ENCODE measurements at regions of chr4 and their contacts with region 1.

Region 1: DNA sequence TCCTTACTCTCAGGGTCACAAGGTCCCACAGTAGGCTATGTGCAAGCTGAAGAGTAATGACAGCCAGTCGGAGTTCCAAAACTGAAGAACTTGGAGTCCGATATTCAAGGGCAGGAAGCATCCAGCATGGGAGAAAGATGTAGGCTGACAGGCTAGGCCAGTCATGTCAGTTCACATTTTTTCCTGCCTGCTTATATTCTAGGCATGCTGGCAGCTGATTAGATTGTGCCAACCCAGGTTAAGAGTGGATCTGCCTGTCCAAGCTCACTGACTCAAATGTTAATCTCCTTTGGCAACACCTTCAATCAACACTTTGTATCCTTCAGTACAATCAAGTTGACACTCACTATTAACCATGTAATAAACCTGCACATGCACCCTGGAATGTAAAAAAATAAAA is 960.9 kb upstream of the HS3ST1 start:
- DNase-seq: no peak
- ATAC-seq: no peak
- H3K4me3 ChIP-seq: no peak overlapping the region
- H3K4me3 Mint-ChIP-seq: no peak overlapping the region
- H3K27ac ChIP-seq: no peak overlapping the region
- H3K27ac Mint-ChIP-seq: no peak overlapping the region
- H3K4me1 ChIP-seq: no peaks in the 10 kb centered on the region
- H3K4me1 Mint-ChIP-seq: no peaks in the 10 kb centered on the region
- H3K27me3 ChIP-seq: no peaks in the 10 kb centered on the region
- H3K27me3 Mint-ChIP-seq: no peaks in the 10 kb centered on the region
- CTCF ChIP-seq: no peak

Region 2: DNA sequence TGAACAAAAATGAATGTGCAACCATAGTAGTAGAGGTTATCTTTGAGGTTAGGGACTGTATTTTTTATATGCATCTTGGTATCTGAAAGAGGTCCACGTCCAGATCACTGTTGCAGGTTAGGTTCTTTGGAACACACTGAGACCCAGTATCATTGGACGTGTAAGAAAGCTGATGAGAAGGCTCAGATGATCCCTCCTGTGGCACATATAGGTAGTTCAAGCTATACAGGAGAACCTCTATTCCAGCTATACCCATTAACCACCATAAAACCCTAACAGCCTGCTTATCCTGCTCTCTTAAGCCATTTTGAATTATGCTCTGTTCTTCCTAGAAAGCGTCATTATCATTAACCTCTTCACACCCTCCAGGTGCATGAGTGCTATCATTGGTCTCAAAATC is 30.2 kb before region 1 on chr4:
- intact Hi-C with region 1: loop called (anchors 1 kb)
- DNase-seq: no peak
- ATAC-seq: no peak
- H3K4me3 ChIP-seq: no peak overlapping the region
- H3K4me3 Mint-ChIP-seq: no peak overlapping the region
- H3K27ac ChIP-seq: no peak overlapping the region
- H3K27ac Mint-ChIP-seq: no peak overlapping the region
- H3K4me1 ChIP-seq: no peaks in the 10 kb centered on the region
- H3K4me1 Mint-ChIP-seq: no peaks in the 10 kb centered on the region
- H3K27me3 ChIP-seq: no peaks in the 10 kb centered on the region
- H3K27me3 Mint-ChIP-seq: no peaks in the 10 kb centered on the region
- CTCF ChIP-seq: no peak

Region 3: DNA sequence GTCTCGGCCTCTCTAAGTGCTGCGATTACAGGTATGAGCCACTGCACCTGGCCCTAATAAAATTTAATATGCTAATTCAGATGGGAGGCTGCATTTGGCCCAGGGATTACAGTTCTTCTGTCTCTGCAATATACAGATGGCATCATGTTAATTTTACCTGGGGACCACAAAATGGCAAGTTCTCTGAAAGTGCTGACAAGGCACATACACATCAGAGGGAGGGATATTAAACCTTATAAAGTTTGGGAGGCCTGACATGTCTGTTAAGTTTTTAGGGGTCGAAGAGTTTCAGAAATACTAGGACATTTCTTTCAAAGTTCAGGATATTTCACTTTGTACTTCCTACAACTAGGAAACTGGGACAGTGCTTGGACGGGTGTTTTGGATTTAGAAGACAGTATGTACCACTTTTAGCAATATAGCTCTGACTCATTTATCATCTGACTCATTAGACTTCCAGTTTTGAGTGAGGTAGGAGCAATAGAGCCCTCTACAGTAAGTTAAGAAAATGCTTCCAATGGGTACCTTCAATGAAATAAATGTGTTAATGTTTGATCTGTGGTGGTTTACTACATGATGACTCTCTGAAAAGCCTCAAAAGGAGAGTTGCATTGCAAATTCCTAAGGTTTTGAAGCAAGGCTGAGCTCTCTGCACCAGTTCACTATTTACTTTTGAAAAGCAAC is 20.0 kb after region 1 on chr4:
- intact Hi-C with region 1: no loop called
- DNase-seq: no peak
- ATAC-seq: no peak
- H3K4me3 ChIP-seq: no peak overlapping the region
- H3K4me3 Mint-ChIP-seq: no peak overlapping the region
- H3K27ac ChIP-seq: no peak overlapping the region
- H3K27ac Mint-ChIP-seq: no peak overlapping the region
- H3K4me1 ChIP-seq: no peaks in the 10 kb centered on the region
- H3K4me1 Mint-ChIP-seq: no peaks in the 10 kb centered on the region
- H3K27me3 ChIP-seq: no peaks in the 10 kb centered on the region
- H3K27me3 Mint-ChIP-seq: no peaks in the 10 kb centered on the region
- CTCF ChIP-seq: no peak

Measured in natural killer cell (primary cell).